B cell (primary cell): ENCODE measurements at regions of chr5 and their contacts with region 1.

Region 1: GRCh38 chr5:32489791-32490582 is 45.4 kb upstream of the ZFR start:
- DNase-seq: peak; percentile 81
- ATAC-seq: peak; percentile 71
- H3K4me3 ChIP-seq: no peak overlapping the region
- H3K4me3 Mint-ChIP-seq: no peak overlapping the region
- H3K27ac ChIP-seq: no peak overlapping the region
- H3K27ac Mint-ChIP-seq: peak overlapping the region; percentile 15
- H3K4me1 ChIP-seq: peaks cover 0 to 5% of the 10 kb centered on the region in 2 donors
- H3K4me1 Mint-ChIP-seq: peaks cover 6% of the 10 kb centered on the region
- H3K27me3 ChIP-seq: peaks cover 0 to 5% (median 0%) of the 10 kb centered on the region in 4 experiments
- H3K27me3 Mint-ChIP-seq: peaks cover 22% of the 10 kb centered on the region
- CTCF ChIP-seq: peak; percentile 84

Region 2: DNA sequence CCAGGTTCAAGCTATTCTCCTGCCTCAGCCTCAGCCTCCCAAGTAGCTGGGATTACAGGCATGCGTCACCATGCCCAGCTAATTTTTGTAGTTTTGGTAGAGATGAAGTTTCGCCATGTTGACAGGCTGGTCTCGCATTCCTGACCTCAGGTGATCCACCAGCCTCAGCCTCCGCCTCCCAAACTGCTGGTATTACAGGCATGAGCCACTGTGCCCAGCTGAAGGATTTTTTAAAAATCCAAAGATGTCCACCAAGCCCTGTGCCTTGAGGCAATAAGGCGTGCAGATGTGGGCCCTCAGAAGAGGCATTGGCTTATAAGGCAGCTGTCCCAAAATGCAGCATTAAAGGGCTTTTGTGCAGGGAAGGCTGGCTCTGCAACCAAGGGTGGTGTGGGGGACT is 35.2 kb before region 1 on chr5:
- CTCF ChIA-PET with region 1: interaction called, 15 read pairs
- POLR2A ChIA-PET with region 1: interaction called, 3 read pairs
- intact Hi-C with region 1: no loop called
- DNase-seq: no peak
- ATAC-seq: no peak
- H3K4me3 ChIP-seq: no peak overlapping the region
- H3K4me3 Mint-ChIP-seq: no peak overlapping the region
- H3K27ac ChIP-seq: no peak overlapping the region
- H3K27ac Mint-ChIP-seq: no peak overlapping the region
- H3K4me1 ChIP-seq: no peaks in the 10 kb centered on the region
- H3K4me1 Mint-ChIP-seq: no peaks in the 10 kb centered on the region
- H3K27me3 ChIP-seq: peaks cover 0 to 3% (median 0%) of the 10 kb centered on the region in 4 experiments
- H3K27me3 Mint-ChIP-seq: peaks cover 21% of the 10 kb centered on the region
- CTCF ChIP-seq: no peak

Region 3: DNA sequence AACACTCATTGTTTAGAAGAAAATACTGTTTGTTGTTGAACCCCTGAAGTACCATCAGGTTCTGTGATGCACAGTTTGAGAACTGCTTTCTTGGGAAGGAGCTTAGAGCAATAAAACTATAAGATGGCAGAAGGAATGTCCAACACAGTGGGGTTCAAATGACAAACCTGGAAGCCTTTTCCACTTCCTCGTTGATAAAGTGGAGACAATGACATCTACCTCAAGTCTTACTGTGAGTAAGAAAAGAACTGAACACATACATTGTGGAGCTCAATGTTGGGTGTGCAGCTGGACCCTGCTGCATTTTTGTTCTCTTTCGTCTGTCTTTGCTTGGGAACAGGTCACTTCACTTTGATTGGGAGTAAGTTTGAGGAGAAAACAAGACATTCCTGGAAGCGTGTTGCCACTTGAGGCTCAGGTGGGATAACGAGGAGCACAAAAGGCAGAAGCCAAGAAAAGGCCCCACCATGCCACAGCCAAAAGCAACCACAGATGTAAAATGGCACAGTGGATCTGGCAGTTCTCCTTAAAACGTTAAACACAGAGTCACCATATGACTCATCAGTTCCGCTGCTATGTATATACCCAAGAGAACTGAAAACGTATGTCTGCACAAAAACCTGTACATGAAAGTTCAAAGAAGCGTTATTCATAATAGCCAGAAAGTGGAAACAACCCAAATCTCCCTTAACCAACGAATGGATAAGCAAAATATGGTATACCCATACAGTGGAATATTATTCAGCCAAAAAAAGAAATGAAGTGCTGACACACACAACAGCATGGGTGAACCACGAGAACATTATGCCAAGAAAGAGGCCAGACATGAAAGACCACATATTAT is 52.5 kb after region 1 on chr5:
- CTCF ChIA-PET with region 1: interaction called, 14 read pairs
- POLR2A ChIA-PET with region 1: interaction called, 5 read pairs
- intact Hi-C with region 1: no loop called
- DNase-seq: no peak
- ATAC-seq: no peak
- H3K4me3 ChIP-seq: no peak overlapping the region
- H3K4me3 Mint-ChIP-seq: no peak overlapping the region
- H3K27ac ChIP-seq: no peak overlapping the region
- H3K27ac Mint-ChIP-seq: no peak overlapping the region
- H3K4me1 ChIP-seq: peaks cover 27 to 41% of the 10 kb centered on the region in 2 donors
- H3K4me1 Mint-ChIP-seq: peaks cover 37% of the 10 kb centered on the region
- H3K27me3 ChIP-seq: no peaks in the 10 kb centered on the region
- H3K27me3 Mint-ChIP-seq: no peaks in the 10 kb centered on the region
- CTCF ChIP-seq: no peak

Region 4: GRCh38 chr5:32613050-32613672 is 123.2 kb after region 1 on chr5:
- CTCF ChIA-PET with region 1: interaction called, 57 read pairs
- POLR2A ChIA-PET with region 1: no interaction called
- intact Hi-C with region 1: loop called (anchors 1 kb)
- DNase-seq: peak; percentile 81
- ATAC-seq: peak; percentile 77
- H3K4me3 ChIP-seq: no peak overlapping the region
- H3K4me3 Mint-ChIP-seq: no peak overlapping the region
- H3K27ac ChIP-seq: no peak overlapping the region
- H3K27ac Mint-ChIP-seq: peak overlapping the region; percentile 17
- H3K4me1 ChIP-seq: peaks cover 0 to 4% of the 10 kb centered on the region in 2 donors
- H3K4me1 Mint-ChIP-seq: peaks cover 3% of the 10 kb centered on the region
- H3K27me3 ChIP-seq: no peaks in the 10 kb centered on the region
- H3K27me3 Mint-ChIP-seq: no peaks in the 10 kb centered on the region
- CTCF ChIP-seq: peak; percentile 98

Region 5: GRCh38 chr5:33059081-33059480 is 569.1 kb after region 1 on chr5:
- CTCF ChIA-PET with region 1: no interaction called
- POLR2A ChIA-PET with region 1: no interaction called
- intact Hi-C with region 1: no loop called
- DNase-seq: no peak
- ATAC-seq: no peak
- H3K4me3 ChIP-seq: no peak overlapping the region
- H3K4me3 Mint-ChIP-seq: no peak overlapping the region
- H3K27ac ChIP-seq: no peak overlapping the region
- H3K27ac Mint-ChIP-seq: no peak overlapping the region
- H3K4me1 ChIP-seq: no peaks in the 10 kb centered on the region
- H3K4me1 Mint-ChIP-seq: no peaks in the 10 kb centered on the region
- H3K27me3 ChIP-seq: no peaks in the 10 kb centered on the region
- H3K27me3 Mint-ChIP-seq: no peaks in the 10 kb centered on the region
- CTCF ChIP-seq: no peak